ENCODE measurements at regions of chr1 and their contacts with region 1.

Region 1: DNA sequence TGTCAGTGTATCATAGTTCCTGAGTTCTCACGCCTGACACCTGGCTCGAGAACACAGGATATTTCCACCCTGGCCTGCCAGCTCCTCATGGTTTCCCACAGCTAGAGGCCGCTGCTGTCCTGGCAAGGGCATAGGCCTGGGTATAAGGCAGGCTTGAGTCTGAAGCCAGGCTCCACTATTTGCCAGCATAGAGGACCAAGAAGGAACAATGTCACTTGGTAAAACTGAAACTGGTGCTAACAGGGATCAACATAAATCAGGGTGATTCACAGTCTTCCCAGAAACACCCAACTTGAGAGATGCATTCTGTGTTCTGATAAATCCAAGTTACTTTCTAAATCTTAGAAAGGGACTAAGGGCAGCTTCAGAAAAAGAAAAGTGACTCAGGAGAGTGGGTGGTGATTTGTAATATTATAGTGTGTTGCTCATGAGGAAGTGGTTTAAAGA is 6.9 kb upstream of the S100A2 start:
- DNase-seq: peak; percentile 79 to 87 (median 84)
- H3K4me3 ChIP-seq: no peak overlapping the region
- H3K27ac ChIP-seq: no peak overlapping the region
- H3K4me1 ChIP-seq: peaks cover 1% of the 10 kb centered on the region
- H3K27me3 ChIP-seq: no peaks in the 10 kb centered on the region
- CTCF ChIP-seq: peak; percentile 74 to 80 (median 76)
- EP300 ChIP-seq: no peak
- POLR2A ChIP-seq: no peak

Region 2: DNA sequence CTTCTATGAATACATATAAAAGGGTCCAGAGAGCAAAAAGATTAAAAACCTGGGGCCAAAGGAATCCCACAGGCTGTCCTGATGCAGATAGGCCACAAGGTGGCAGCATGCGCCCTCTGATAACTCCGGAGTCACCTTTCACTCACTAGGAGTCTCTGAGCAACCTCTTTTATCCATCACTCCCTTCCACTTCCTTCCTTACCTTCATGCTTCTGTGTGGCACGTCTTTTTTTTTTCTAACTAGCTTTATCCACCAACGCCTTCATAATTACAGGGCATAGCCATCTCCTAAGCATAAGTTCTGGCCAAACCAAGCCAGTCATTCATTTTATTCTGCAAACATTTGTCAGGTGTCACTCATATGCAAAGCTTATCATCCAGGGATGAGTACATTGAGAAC is 220.1 kb before region 1 on chr1:
- intact Hi-C with region 1: loop called in 3 of 4 experiments (anchors 5 to 10 kb)
- DNase-seq: peak; percentile 61 to 83 (median 77)
- H3K4me3 ChIP-seq: no peak overlapping the region
- H3K27ac ChIP-seq: no peak overlapping the region
- H3K4me1 ChIP-seq: no peaks in the 10 kb centered on the region
- H3K27me3 ChIP-seq: no peaks in the 10 kb centered on the region
- CTCF ChIP-seq: peak; percentile 56 to 85 (median 75)
- EP300 ChIP-seq: no peak
- POLR2A ChIP-seq: no peak

Region 3: DNA sequence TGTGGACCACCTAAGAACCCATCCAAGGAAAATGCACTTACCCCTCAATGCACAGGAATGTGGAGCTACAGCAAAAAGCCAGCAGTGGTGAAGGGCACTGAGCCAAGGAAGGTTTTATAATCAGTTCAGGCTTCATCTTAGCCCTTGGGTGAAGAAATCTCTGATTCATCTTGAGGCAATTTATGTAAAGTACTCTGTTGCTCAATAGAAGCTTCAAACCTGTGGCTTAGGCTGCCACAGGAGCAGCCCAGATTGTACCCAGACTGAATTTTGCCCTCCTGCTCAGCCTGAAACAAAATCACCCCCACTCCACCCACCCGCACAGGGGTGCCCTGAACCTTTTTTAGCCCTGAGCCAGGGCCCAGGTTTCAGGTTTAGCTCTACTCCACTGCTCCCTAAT is 197.1 kb before region 1 on chr1 and contains the start of gene S100A12:
- intact Hi-C with region 1: no loop called
- DNase-seq: no peak
- H3K4me3 ChIP-seq: no peak within 1 kb of the TSS
- H3K27ac ChIP-seq: no peak within 1 kb of the TSS
- H3K4me1 ChIP-seq: no peaks in the 10 kb centered on the region
- H3K27me3 ChIP-seq: no peaks in the 10 kb centered on the region
- CTCF ChIP-seq: no peak
- EP300 ChIP-seq: no peak
- POLR2A ChIP-seq: no peak
- total RNA-seq, gene S100A12: 0.70 to 2.4 (median 1.0) TPM in 5 of 7 donors, not detected in the others

Region 4: GRCh38 chr1:153532769-153533599 is 39.6 kb before region 1 on chr1:
- intact Hi-C with region 1: loop called in 3 of 4 experiments (anchors 1 to 2 kb)
- DNase-seq: peak; percentile 87 to 92 (median 90)
- H3K4me3 ChIP-seq: peak overlapping the region; percentile 56
- H3K27ac ChIP-seq: peak overlapping the region; percentile 31 to 97
- H3K4me1 ChIP-seq: peaks cover 18% of the 10 kb centered on the region
- H3K27me3 ChIP-seq: no peaks in the 10 kb centered on the region
- CTCF ChIP-seq: peak; percentile 79 to 91 (median 87)
- EP300 ChIP-seq: no peak
- POLR2A ChIP-seq: peak; percentile 14

Region 5: DNA sequence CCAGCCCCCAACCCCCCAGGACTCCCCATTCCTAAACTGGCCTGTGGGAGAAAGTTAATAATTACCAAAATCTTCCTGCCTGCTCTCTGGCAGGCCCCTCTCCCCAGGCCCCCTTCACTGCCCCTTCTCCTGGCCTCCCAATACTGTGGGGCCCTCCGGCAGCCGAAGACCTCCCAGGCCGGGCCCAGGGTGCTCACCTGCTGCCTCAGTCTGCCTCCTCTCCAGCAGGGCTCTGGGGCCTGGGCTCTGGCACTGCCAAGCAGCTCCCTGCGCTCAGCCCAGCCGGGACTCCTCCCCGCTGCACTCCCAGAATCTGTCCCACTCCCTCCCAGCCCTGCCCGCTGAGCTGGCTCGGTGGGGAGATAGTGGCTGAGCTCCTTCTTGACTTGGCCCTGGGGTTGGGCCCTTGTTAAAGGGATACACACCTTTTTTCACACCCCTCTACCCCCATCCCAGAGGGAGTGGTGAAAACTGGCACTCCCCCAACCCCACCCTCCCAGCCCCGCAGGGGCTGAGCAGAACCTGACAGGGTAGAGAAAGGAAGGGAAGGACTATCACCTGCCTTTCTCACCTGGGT is 40.3 kb after region 1 on chr1 and contains the start of gene S100A16:
- intact Hi-C with region 1: no loop called
- DNase-seq: peak; percentile 81 to 86 (median 82)
- H3K4me3 ChIP-seq: peak within 1 kb of the TSS; percentile 74
- H3K27ac ChIP-seq: peak within 1 kb of the TSS; percentile 84 to 93
- H3K4me1 ChIP-seq: peaks cover 36% of the 10 kb centered on the region
- H3K27me3 ChIP-seq: no peaks in the 10 kb centered on the region
- CTCF ChIP-seq: no peak
- EP300 ChIP-seq: no peak
- POLR2A ChIP-seq: peak; percentile 76
- total RNA-seq, gene S100A16: 40.7 to 110 (median 67.3) TPM

Region 6: DNA sequence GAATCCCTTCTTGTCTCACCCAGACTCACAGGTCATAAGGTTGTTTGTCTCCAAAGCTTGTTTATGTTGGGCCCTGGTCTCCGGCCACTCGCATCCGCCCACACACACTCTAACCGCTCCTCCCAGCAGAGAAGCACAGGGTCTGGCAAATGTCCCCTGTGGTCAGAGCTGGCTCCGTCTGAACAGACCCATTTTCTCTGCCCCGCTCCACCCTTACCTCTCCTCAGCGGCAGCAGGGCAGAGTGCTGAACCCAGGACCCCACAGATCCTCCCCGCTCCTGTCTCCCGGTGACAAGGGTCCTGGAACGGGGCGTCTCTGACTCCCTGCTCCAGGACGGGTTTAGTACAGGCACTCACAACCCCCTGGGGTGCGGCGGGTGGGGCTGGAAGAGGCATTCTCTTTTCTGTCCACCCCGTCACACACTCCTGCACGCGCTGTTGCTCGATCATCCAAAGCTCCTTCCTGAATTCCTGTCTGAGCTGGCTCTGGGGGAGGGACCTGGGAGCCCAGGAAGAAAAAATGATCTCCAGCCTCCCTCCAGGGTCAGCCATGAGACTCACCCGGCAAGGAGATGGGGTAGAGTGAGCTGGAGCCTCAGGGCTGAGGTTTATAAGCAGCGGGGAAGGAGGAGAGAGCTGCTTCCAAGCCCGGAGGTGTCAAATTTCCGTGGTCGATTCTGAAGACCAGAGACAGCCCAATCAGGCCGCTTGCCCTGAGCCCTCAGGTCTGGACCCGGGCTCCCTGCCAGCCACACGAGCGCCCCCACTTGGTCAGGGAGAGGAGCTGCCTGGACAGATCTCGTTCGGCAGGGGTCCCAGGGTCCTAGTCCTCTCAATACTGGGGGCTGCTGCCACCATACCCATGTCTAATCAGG is 54.6 kb after region 1 on chr1 and contains the start of gene S100A13:
- intact Hi-C with region 1: loop called in 1 of 4 experiments (anchors 10 kb)
- DNase-seq: peak; percentile 82 to 90 (median 88)
- H3K4me3 ChIP-seq: peak within 1 kb of the TSS; percentile 36
- H3K27ac ChIP-seq: peak within 1 kb of the TSS; percentile 59 to 72
- H3K4me1 ChIP-seq: peaks cover 3% of the 10 kb centered on the region
- H3K27me3 ChIP-seq: no peaks in the 10 kb centered on the region
- CTCF ChIP-seq: peak; percentile 8 to 50 (median 29)
- EP300 ChIP-seq: no peak
- POLR2A ChIP-seq: peak; percentile 62
- total RNA-seq, gene S100A13: 73.2 to 263 (median 103) TPM

Region 7: DNA sequence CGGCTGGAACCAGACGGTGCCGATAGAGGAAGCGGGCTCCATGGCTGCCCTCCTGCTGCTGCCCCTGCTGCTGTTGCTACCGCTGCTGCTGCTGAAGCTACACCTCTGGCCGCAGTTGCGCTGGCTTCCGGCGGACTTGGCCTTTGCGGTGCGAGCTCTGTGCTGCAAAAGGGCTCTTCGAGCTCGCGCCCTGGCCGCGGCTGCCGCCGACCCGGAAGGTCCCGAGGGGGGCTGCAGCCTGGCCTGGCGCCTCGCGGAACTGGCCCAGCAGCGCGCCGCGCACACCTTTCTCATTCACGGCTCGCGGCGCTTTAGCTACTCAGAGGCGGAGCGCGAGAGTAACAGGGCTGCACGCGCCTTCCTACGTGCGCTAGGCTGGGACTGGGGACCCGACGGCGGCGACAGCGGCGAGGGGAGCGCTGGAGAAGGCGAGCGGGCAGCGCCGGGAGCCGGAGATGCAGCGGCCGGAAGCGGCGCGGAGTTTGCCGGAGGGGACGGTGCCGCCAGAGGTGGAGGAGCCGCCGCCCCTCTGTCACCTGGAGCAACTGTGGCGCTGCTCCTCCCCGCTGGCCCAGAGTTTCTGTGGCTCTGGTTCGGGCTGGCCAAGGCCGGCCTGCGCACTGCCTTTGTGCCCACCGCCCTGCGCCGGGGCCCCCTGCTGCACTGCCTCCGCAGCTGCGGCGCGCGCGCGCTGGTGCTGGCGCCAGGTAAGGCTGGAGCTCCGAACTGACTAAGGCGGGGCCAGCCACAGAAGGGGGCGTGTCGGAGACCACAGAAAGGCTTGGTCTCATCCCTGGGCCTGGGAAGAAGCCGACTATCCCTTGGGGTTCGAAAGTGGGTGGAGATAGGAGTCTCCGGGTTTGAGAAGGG is 203.1 kb after region 1 on chr1:
- intact Hi-C with region 1: loop called in 1 of 4 experiments (anchors 10 kb)
- DNase-seq: peak; percentile 82 to 85 (median 83)
- H3K4me3 ChIP-seq: peak overlapping the region; percentile 73
- H3K27ac ChIP-seq: peak overlapping the region; percentile 69 to 84
- H3K4me1 ChIP-seq: peaks cover 9% of the 10 kb centered on the region
- H3K27me3 ChIP-seq: no peaks in the 10 kb centered on the region
- CTCF ChIP-seq: no peak
- EP300 ChIP-seq: no peak
- POLR2A ChIP-seq: peak; percentile 31